CD4-positive, alpha-beta T cell (primary cell): ENCODE measurements at regions of chr19 and their contacts with region 1.

Region 1: GRCh38 chr19:18919086-18919899 is at the starts of genes COPE and DDX49:
- DNase-seq: peak; percentile 92 to 100 (median 97)
- ATAC-seq: peak; percentile 94
- H3K4me3 ChIP-seq: peak within 1 kb of the TSS; percentile 65
- H3K4me3 Mint-ChIP-seq: peak within 1 kb of the TSS; percentile 84
- H3K27ac ChIP-seq: peak within 1 kb of the TSS; percentile 92
- H3K27ac Mint-ChIP-seq: peak within 1 kb of the TSS; percentile 66
- H3K4me1 ChIP-seq: peaks cover 47% of the 10 kb centered on the region
- H3K4me1 Mint-ChIP-seq: peaks cover 42% of the 10 kb centered on the region
- H3K27me3 ChIP-seq: no peaks in the 10 kb centered on the region
- H3K27me3 Mint-ChIP-seq: no peaks in the 10 kb centered on the region
- CTCF ChIP-seq: no peak
- total RNA-seq, gene COPE: 135 to 143 TPM
- total RNA-seq, gene DDX49: 47.9 to 49.7 TPM

Region 2: DNA sequence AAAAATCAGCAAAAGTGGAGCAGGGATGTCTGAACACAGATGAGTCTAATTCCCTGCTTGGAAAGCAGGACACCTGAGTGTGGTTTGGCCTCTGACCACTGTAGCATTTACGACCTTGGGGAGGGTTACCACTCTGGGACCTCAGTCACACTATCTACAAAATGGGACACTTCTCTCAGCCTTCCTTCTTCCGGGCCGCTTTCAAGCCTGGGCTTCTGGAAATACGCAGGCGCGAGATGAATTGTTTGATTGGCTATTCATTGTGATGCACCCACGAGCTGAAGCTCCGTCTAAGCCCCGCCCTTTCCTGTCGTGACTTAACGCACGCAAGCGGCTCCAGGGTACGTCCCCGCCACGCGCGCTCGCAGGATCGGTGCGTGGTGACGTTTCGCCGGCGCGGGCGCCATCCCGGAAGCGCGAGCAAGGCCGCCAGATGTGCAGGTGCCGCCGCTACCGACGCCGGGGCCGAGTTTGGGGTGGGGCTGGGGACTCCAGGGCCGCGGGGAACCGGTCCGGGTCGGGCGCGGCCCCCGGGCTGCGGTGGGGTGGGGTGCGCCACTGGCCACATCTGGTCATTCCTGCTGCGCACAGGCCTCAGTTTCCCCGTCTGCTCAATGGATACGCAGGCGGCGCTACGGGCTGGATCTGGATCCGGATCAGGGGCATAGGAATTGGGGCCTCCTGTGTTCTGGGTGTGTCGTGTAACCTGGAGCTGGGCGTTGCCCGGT is 361.7 kb before region 1 on chr19 and contains the start of gene KXD1:
- CTCF ChIA-PET with region 1: no interaction called
- POLR2A ChIA-PET with region 1: interaction called, 14 read pairs
- intact Hi-C with region 1: no loop called
- DNase-seq: peak; percentile 93 to 100 (median 97)
- ATAC-seq: peak; percentile 99
- H3K4me3 ChIP-seq: peak within 1 kb of the TSS; percentile 99
- H3K4me3 Mint-ChIP-seq: peak within 1 kb of the TSS; percentile 94
- H3K27ac ChIP-seq: peak within 1 kb of the TSS; percentile 94 to 97
- H3K27ac Mint-ChIP-seq: peak within 1 kb of the TSS; percentile 98
- H3K4me1 ChIP-seq: peaks cover 30% of the 10 kb centered on the region
- H3K4me1 Mint-ChIP-seq: peaks cover 26% of the 10 kb centered on the region
- H3K27me3 ChIP-seq: no peaks in the 10 kb centered on the region
- H3K27me3 Mint-ChIP-seq: no peaks in the 10 kb centered on the region
- CTCF ChIP-seq: no peak
- total RNA-seq, gene KXD1: 64.2 to 66.9 TPM

Region 3: DNA sequence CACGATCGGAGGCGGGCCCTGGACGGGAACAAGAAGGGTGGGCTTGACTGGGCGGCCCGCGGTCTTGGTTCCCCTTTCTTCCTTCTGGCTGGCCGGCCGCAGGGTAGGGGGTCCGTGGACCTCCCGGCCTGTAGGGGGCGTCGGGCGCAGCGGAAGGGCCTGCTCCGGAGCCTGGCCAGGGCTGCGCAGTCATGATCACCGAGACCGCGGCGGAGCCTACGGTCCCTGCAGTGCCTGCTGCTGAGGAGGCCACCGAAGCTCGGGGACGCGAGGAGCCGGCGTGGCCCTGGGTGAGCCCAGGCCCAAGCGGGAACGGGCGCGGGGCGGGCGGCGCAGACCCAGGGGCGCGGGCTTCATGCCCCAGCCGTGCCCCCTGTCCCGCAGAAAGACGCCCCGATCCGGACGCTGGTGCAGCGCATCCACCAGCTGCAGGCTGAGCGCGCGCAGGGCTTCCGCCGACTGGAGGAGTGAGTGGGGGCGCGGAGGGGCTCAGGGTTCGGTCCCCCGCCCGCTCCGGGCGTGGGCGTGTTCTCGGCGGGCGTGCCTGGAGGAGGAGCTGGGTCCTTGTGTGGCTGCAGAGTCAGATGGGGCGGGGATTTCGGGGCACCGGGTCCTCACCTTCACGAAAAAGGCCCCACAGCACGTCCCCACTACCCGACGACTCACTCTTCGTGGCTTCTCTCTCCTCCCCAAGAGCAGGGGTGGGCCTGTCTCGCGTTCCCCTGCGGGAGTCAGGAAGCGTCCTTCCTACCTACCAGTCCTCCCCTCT is 330.5 kb before region 1 on chr19 and contains the start of gene REX1BD:
- CTCF ChIA-PET with region 1: interaction called, 4 read pairs
- POLR2A ChIA-PET with region 1: interaction called, 20 read pairs
- intact Hi-C with region 1: loop called in 1 of 2 experiments (anchors 5 kb)
- DNase-seq: peak; percentile 70 to 95 (median 87)
- ATAC-seq: peak; percentile 77
- H3K4me3 ChIP-seq: peak within 1 kb of the TSS; percentile 76
- H3K4me3 Mint-ChIP-seq: peak within 1 kb of the TSS; percentile 95
- H3K27ac ChIP-seq: peak within 1 kb of the TSS; percentile 80 to 88
- H3K27ac Mint-ChIP-seq: peak within 1 kb of the TSS; percentile 95
- H3K4me1 ChIP-seq: peaks cover 48% of the 10 kb centered on the region
- H3K4me1 Mint-ChIP-seq: peaks cover 42% of the 10 kb centered on the region
- H3K27me3 ChIP-seq: no peaks in the 10 kb centered on the region
- H3K27me3 Mint-ChIP-seq: no peaks in the 10 kb centered on the region
- CTCF ChIP-seq: peak; percentile 83
- total RNA-seq, gene REX1BD: 88.4 to 88.9 TPM

Region 4: DNA sequence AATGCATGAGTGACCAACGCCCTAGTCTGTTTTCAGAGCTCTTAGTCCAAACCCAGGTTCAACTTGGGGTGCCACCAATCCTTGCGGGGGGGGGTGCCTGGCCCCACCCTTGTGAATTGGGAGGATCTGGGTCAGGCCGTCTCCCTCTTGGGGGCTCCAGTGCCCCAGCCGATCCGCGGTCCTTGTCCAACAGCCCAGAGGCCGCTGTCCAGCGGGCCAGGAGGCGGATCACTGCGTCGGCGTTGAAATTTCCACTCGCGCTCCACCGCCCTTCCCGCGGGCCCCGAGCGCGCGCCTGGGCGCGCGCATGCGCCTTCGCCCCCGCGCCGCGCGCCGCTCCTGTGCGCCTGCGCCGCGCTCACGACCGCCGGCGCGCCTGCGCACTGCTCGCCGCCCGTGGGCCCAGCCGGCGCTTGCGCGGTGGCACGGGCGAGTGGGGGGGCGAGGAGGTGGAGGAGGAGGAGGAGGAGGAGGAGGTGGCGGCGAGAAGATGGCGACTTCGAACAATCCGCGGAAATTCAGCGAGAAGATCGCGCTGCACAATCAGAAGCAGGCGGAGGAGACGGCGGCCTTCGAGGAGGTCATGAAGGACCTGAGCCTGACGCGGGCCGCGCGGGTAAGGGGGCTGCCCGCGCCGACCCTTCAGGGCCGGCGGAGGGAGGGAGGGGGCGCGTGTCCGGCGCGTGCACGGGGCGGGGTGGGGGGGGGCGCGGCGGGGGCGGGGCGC is 235.9 kb before region 1 on chr19 and contains the start of gene CRTC1:
- CTCF ChIA-PET with region 1: no interaction called
- POLR2A ChIA-PET with region 1: no interaction called
- intact Hi-C with region 1: loop called in 1 of 2 experiments (anchors 2 kb)
- DNase-seq: peak; percentile 92 to 97 (median 94)
- ATAC-seq: peak; percentile 86
- H3K4me3 ChIP-seq: peak within 1 kb of the TSS; percentile 76
- H3K4me3 Mint-ChIP-seq: peak within 1 kb of the TSS; percentile 92
- H3K27ac ChIP-seq: peak within 1 kb of the TSS; percentile 29 to 65
- H3K27ac Mint-ChIP-seq: peak within 1 kb of the TSS; percentile 77
- H3K4me1 ChIP-seq: peaks cover 30% of the 10 kb centered on the region
- H3K4me1 Mint-ChIP-seq: peaks cover 36% of the 10 kb centered on the region
- H3K27me3 ChIP-seq: no peaks in the 10 kb centered on the region
- H3K27me3 Mint-ChIP-seq: no peaks in the 10 kb centered on the region
- CTCF ChIP-seq: no peak
- total RNA-seq, gene CRTC1: 11.8 to 12.2 TPM

Region 5: DNA sequence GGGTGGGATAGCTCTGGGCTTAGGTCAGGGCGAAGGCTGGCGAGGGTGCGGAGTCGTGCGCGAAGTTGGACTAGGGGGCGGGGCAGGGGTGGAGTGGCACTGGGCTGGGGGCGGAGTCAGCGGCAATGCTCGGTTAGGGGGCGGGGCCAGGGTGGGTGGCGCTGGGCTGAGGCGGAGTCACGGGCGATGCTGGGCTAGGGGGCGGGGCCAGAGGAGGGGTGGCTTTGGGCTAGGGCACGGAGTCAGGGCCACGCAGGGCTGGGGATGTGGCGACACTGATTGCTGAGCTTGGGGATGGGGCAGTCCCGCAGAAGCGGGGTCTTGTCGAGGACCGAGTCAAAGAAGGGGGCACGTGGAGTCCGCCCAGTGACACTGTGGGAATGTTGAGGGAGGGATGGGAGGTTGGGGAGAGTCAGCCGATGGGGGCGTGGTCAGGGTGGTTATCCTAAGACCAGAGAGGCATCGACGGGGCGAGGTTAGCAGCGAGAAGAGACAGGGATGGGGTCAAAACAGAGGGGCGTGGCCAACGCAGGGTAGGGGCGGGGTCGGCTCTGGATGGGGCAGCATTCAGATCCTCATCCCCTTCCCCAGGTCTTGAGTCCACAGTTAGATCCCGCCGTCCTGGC is 13.0 kb after region 1 on chr19:
- CTCF ChIA-PET with region 1: no interaction called
- POLR2A ChIA-PET with region 1: interaction called, 20 read pairs
- intact Hi-C with region 1: loop called in 1 of 2 experiments (anchors 1 kb)
- DNase-seq: peak; percentile 69 to 93 (median 84)
- ATAC-seq: peak; percentile 97
- H3K4me3 ChIP-seq: peak overlapping the region; percentile 48
- H3K4me3 Mint-ChIP-seq: peak overlapping the region; percentile 84
- H3K27ac ChIP-seq: no peak overlapping the region
- H3K27ac Mint-ChIP-seq: no peak overlapping the region
- H3K4me1 ChIP-seq: peaks cover 13% of the 10 kb centered on the region
- H3K4me1 Mint-ChIP-seq: peaks cover 10% of the 10 kb centered on the region
- H3K27me3 ChIP-seq: peaks cover 3 to 4% of the 10 kb centered on the region in 2 experiments
- H3K27me3 Mint-ChIP-seq: peaks cover 14% of the 10 kb centered on the region
- CTCF ChIP-seq: no peak

Region 6: DNA sequence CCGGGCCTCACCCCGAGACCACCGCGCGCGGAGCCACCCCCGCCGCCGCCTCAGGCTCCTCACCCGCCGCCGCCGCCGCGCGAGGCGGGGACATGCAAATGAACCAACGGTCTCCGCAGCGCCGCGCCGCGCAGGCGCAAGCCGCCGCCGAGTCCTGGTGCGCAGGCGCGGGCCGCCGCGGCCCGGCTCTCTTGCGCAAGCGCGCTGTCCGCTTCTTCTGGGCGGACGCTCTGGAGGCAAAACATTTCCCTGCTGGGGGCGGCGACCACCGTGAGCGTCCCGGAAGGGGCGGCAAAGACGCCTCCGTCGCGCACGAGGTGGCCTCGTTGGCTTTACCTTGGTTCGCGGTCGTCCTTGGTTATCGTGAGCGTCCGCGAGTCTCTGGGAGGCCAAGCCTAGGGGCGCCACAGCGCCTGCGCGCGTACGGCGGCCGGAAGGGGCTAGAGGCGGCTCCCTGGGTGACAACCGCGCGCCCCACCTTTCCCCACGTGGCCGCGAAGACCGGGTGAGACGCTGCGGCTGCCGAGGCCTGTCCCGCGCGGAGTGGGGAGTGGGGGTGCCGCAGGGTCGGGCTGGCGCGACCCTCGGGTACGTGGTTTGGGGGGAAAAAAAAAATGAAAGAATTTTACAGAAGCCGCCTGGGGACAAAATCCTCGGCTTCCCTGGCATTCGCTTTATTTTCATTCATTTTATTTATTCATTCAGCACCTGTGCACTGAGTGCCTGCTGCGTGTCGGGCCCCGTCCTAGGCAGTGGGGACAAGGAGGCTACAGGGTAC is 114.3 kb after region 1 on chr19 and contains the starts of genes ARMC6 and SUGP2:
- CTCF ChIA-PET with region 1: no interaction called
- POLR2A ChIA-PET with region 1: no interaction called
- intact Hi-C with region 1: loop called in 1 of 2 experiments (anchors 2 kb)
- DNase-seq: peak; percentile 77 to 96 (median 87)
- ATAC-seq: peak; percentile 71
- H3K4me3 ChIP-seq: peak within 1 kb of the TSS; percentile 86
- H3K4me3 Mint-ChIP-seq: peak within 1 kb of the TSS; percentile 99
- H3K27ac ChIP-seq: peak within 1 kb of the TSS; percentile 77 to 81
- H3K27ac Mint-ChIP-seq: peak within 1 kb of the TSS; percentile 88
- H3K4me1 ChIP-seq: peaks cover 42% of the 10 kb centered on the region
- H3K4me1 Mint-ChIP-seq: peaks cover 38% of the 10 kb centered on the region
- H3K27me3 ChIP-seq: no peaks in the 10 kb centered on the region
- H3K27me3 Mint-ChIP-seq: no peaks in the 10 kb centered on the region
- CTCF ChIP-seq: no peak
- total RNA-seq, gene ARMC6: 5.9 to 6.0 TPM
- total RNA-seq, gene SUGP2: 106 to 110 TPM